Activated CD4-positive, alpha-beta T cell treated with anti-CD3 and anti-CD28 coated beads for 36 hours (primary cell): ENCODE measurements at regions of chr12 and their contacts with region 1.

Region 1: GRCh38 chr12:24600996-24601395 is 347.9 kb downstream of the BCAT1 start:
- DNase-seq: peak; percentile 18
- ATAC-seq: peak; percentile 78
- H3K4me3 Mint-ChIP-seq: no peak overlapping the region
- H3K27ac Mint-ChIP-seq: no peak overlapping the region
- H3K4me1 Mint-ChIP-seq: peaks cover 13% of the 10 kb centered on the region
- H3K27me3 Mint-ChIP-seq: peaks cover 4% of the 10 kb centered on the region

Region 2: DNA sequence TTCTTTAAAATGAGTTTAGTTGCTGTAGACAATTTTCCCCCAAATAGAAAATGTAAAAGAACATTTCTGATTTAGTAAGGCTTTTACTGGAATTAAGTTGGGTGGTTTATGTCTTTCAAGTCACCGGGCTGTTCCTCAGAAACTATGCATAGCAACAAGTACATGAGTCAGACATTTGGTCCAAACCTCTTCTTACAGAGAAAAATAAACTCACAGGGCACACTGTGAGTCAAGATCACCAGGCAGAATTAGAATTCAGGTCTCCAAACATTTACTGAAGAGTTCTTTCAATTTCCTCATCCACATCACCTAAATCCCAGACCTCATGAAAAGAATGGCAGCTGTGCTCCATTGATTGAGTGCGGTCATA is 175.4 kb before region 1 on chr12:
- CTCF ChIA-PET with region 1: no interaction called
- POLR2A ChIA-PET with region 1: no interaction called
- intact Hi-C with region 1: loop called in 1 of 2 experiments (anchors 1 kb)
- DNase-seq: peak; percentile 34
- ATAC-seq: peak; percentile 88
- H3K4me3 Mint-ChIP-seq: no peak overlapping the region
- H3K27ac Mint-ChIP-seq: peak overlapping the region; percentile 80
- H3K4me1 Mint-ChIP-seq: peaks cover 19% of the 10 kb centered on the region
- H3K27me3 Mint-ChIP-seq: peaks cover 5% of the 10 kb centered on the region

Region 3: GRCh38 chr12:24705741-24706358 is 104.9 kb after region 1 on chr12:
- CTCF ChIA-PET with region 1: no interaction called
- POLR2A ChIA-PET with region 1: no interaction called
- intact Hi-C with region 1: loop called (anchors 2 to 5 kb)
- DNase-seq: peak; percentile 22
- ATAC-seq: peak; percentile 21
- H3K4me3 Mint-ChIP-seq: peak overlapping the region; percentile 42
- H3K27ac Mint-ChIP-seq: peak overlapping the region; percentile 86
- H3K4me1 Mint-ChIP-seq: peaks cover 16% of the 10 kb centered on the region
- H3K27me3 Mint-ChIP-seq: peaks cover 12% of the 10 kb centered on the region

Region 4: DNA sequence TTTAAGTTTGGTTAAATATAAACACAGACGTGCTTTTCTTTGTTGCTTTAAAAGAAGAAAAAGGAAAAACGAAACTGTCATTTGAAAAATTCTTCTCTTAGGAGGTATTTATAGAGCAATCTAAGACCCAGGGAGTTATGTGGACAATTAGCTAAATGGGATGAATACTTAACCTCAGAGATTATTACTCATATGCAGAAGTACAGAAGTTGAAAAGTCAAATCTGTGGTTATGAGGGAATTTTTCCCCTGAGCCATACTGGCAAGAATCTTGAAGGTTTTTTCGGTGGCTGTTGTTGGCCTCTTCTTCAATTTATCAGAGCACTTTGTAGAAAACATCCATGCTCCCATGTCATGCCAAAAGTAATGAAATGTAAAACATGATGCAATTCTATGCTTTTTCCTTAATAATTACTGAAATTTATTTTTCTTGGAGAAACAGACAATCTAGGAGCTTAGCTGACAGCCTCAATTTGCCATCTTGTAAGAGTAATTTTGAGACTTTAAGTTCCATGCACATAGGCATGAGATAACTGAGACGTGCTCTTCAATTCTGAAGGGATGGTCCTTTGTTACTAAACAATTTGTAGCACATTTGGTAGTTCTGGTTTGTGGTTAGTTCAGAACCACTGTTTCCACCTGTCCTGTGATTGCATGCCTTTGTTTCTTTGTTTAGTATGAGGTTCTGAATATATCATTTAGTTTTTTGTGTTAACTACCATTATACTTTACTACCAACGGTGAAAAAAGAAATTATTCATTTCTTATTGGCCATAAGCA is 221.3 kb after region 1 on chr12:
- CTCF ChIA-PET with region 1: interaction called, 3 read pairs
- POLR2A ChIA-PET with region 1: no interaction called
- intact Hi-C with region 1: loop called in 1 of 2 experiments (anchors 2 kb)
- DNase-seq: no peak
- ATAC-seq: peak; percentile 64
- H3K4me3 Mint-ChIP-seq: peak overlapping the region; percentile 17
- H3K27ac Mint-ChIP-seq: peak overlapping the region; percentile 75
- H3K4me1 Mint-ChIP-seq: peaks cover 32% of the 10 kb centered on the region
- H3K27me3 Mint-ChIP-seq: no peaks in the 10 kb centered on the region